HEK293 (cell line): ENCODE measurements at regions of chr19 and their contacts with region 1.

Region 1: GRCh38 chr19:38224014-38224862 is at the start of gene DPF1:
- H3K4me3 ChIP-seq: peak within 1 kb of the TSS; percentile 62
- H3K27ac ChIP-seq: peak within 1 kb of the TSS; percentile 50; the same call in 1 of the 2 replicates
- H3K4me1 ChIP-seq: peaks cover 16% of the 10 kb centered on the region
- CTCF ChIP-seq: peak; percentile 90

Region 2: DNA sequence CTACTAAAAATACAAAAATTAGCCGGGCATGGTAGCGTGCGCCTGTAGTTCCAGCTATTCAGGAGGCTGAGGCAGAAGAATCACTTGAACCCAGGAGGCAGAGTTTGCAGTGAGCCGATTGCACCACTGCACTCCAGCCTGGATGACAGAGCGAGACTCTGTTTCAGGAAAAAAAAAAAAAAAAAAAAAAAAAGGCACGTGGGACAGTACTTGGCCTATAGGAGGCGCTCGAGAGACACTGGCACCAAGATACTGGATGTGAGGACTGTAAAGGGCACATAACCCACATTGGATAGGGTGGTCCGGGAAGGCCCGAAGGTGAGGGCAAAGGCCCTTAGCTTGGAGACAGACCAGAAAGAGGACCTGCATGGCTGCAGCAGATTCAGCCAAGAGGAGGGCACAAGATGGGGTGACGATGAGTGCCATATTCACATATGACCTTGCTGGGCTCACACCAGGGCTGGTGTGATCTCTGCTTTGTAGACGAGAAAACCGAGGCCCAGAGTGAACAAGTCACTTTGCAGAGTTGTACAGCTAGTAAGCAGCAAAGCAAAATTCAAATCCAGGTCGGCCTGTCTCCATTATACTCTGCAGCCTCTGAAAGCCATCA is 89.6 kb before region 1 on chr19:
- CTCF ChIA-PET with region 1: interaction called, 14 read pairs
- POLR2A ChIA-PET with region 1: no interaction called
- H3K4me3 ChIP-seq: no peak overlapping the region
- H3K27ac ChIP-seq: no peak overlapping the region
- H3K4me1 ChIP-seq: no peaks in the 10 kb centered on the region
- CTCF ChIP-seq: peak; percentile 96

Region 3: DNA sequence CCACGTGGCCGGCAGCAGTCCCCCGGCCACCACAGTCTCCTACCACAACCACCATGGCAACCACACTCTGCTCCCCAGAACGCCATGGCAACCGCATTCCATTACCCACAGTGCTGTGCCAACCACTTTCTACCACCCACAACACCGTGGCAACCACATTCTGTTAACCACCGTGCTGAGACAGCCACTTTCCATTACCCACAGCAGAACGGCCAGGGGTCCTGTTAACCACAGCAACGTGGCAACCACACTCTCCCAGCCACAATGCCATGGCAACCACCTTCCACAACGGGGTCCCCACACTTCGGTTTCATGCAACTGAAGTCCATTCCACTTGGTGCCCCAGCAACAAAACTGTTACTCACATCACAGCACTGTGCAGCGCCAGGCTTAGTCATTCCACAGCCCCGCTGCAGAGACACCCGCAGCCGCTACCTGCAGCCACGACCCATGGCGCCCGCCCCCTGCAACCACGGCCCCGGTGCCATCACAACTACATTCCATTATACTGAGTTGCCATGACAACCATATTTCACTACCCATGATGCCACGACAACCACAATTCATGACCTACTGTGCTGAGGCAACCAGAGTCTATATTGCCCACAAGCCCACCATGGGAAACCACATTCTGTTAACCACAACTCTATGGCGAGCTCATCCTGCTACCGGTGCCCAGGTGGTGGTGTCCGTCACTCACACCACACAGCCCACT is 10.2 kb before region 1 on chr19:
- CTCF ChIA-PET with region 1: interaction called, 14 read pairs
- POLR2A ChIA-PET with region 1: no interaction called
- H3K4me3 ChIP-seq: no peak overlapping the region
- H3K27ac ChIP-seq: no peak overlapping the region
- H3K4me1 ChIP-seq: peaks cover 21% of the 10 kb centered on the region
- CTCF ChIP-seq: no peak

Region 4: GRCh38 chr19:38245826-38246498 is 21.7 kb after region 1 on chr19:
- CTCF ChIA-PET with region 1: interaction called, 26 read pairs
- POLR2A ChIA-PET with region 1: no interaction called
- H3K4me3 ChIP-seq: no peak overlapping the region
- H3K27ac ChIP-seq: no peak overlapping the region
- H3K4me1 ChIP-seq: peaks cover 6% of the 10 kb centered on the region; the same call in 1 of the 2 replicates
- CTCF ChIP-seq: no peak

Region 5: GRCh38 chr19:38304866-38305429 is 80.7 kb after region 1 on chr19:
- CTCF ChIA-PET with region 1: no interaction called
- POLR2A ChIA-PET with region 1: no interaction called
- H3K4me3 ChIP-seq: no peak overlapping the region
- H3K27ac ChIP-seq: peak overlapping the region; percentile 50
- H3K4me1 ChIP-seq: peaks cover 11% of the 10 kb centered on the region
- CTCF ChIP-seq: no peak